Dendritic cell treated with granulocyte-macrophage colony-stimulating factor and Interleukin-4, amounts not matched to agents 40 ng/mL and 50 ng/mL, for 4 days (primary cell): ENCODE measurements at regions of chr17 and their contacts with region 1.

Region 1: DNA sequence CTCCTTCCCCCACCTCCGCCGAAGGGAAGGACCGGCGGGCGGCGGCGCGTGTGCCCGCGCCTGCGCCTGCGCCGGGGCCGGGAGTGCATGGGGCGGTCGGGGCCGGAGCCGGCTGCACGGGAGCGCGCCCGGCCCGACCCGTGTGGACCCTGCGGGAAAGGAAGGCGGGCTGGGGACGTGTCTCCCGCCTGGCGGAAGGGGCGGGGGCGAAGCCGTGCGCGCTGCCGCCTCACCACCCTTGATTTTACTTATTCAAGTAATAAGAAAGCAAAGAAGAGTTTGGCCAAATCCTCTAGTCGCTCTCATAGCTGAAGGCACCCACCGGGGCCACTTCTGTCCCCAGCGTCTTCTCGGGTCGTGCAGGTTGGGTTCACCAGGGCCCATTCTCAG is 596 bp upstream of the PFN1 start:
- H3K4me3 Mint-ChIP-seq: peak overlapping the region; percentile 84
- H3K27ac Mint-ChIP-seq: peak overlapping the region; percentile 90
- H3K4me1 Mint-ChIP-seq: peaks cover 60% of the 10 kb centered on the region
- H3K27me3 Mint-ChIP-seq: no peaks in the 10 kb centered on the region

Region 2: DNA sequence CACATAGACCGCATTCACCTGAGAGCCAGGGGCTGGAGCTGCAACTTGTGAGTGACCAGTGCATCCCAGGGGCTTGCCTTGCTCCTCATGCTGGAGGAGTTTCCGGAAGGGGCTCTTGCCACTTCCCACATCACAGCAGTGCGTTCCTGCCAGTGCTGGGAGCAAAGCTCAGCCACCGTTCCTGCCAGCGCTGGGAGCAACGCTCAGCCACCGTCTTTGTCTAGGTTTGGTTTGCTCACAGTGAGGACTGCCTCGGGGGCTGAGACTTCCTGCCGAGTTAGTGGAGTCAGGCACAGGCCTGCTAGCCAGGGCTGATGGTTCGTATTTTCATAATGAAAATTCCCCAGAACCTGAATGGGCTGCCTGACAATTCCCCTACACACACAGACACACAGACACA is 40.6 kb before region 1 on chr17:
- intact Hi-C with region 1: loop called (anchors 5 kb)
- H3K4me3 Mint-ChIP-seq: no peak overlapping the region
- H3K27ac Mint-ChIP-seq: no peak overlapping the region
- H3K4me1 Mint-ChIP-seq: peaks cover 4% of the 10 kb centered on the region
- H3K27me3 Mint-ChIP-seq: peaks cover 22% of the 10 kb centered on the region

Region 3: GRCh38 chr17:4931963-4932362 is 17.0 kb before region 1 on chr17 and contains the start of gene GP1BA:
- intact Hi-C with region 1: no loop called
- H3K4me3 Mint-ChIP-seq: peak within 1 kb of the TSS; percentile 38
- H3K27ac Mint-ChIP-seq: peak within 1 kb of the TSS; percentile 70
- H3K4me1 Mint-ChIP-seq: peaks cover 67% of the 10 kb centered on the region
- H3K27me3 Mint-ChIP-seq: peaks cover 16% of the 10 kb centered on the region

Region 4: GRCh38 chr17:4986951-4987766 is 38.2 kb after region 1 on chr17 and contains the start of gene CAMTA2:
- intact Hi-C with region 1: loop called (anchors 5 kb)
- H3K4me3 Mint-ChIP-seq: peak within 1 kb of the TSS; percentile 91
- H3K27ac Mint-ChIP-seq: peak within 1 kb of the TSS; percentile 93
- H3K4me1 Mint-ChIP-seq: peaks cover 62% of the 10 kb centered on the region
- H3K27me3 Mint-ChIP-seq: no peaks in the 10 kb centered on the region